ENCODE measurements at regions of chr3 and their contacts with region 1.

Region 1: GRCh38 chr3:186882881-186883685 is 40.6 kb downstream of the ADIPOQ start:
- DNase-seq: peak; percentile 31
- H3K4me3 Mint-ChIP-seq: peak overlapping the region; percentile 54
- H3K27ac Mint-ChIP-seq: peak overlapping the region; percentile 90
- H3K4me1 Mint-ChIP-seq: peaks cover 58% of the 10 kb centered on the region
- H3K27me3 Mint-ChIP-seq: no peaks in the 10 kb centered on the region

Region 2: DNA sequence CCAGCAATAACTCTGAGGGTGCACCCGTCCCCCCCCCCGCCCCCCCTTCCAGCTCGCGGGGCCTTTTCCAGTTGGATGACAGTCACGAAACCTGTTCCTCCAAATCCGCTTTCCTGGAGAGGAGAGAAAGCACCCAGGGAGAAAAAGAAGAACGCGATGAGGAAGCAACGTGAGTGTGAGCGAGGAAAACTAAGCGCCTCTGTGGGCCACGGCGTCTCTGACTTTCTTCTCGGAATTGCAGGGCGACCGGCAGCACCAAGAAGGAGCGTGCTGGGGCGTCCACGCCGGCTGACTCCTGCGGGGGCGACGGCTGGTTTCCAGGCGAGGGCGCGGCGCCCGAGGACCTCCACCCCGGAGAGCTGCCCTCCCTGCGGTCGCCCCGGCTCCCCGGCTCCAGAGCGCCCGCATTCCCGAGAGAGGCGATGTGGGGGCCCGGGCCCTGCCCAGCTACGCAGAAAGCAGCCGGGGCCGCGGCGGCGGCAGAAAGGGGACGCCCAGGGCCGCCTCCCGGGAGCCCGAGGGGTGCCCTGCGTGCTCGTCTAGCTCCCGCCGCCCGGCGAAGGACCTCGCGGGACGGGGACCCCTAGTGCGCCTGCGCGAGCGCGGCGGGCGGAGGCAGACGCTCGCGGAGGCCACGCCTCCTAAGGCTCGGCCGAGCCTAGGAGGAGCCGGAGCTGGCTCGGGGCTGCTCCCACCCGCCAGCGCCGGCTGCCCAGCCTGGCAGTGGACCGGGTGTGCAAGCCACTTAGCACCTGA is 55.9 kb before region 1 on chr3:
- intact Hi-C with region 1: loop called (anchors 2 kb)
- DNase-seq: peak; percentile 87
- H3K4me3 Mint-ChIP-seq: peak overlapping the region; percentile 93
- H3K27ac Mint-ChIP-seq: peak overlapping the region; percentile 78
- H3K4me1 Mint-ChIP-seq: peaks cover 20% of the 10 kb centered on the region
- H3K27me3 Mint-ChIP-seq: peaks cover 48% of the 10 kb centered on the region

Region 3: DNA sequence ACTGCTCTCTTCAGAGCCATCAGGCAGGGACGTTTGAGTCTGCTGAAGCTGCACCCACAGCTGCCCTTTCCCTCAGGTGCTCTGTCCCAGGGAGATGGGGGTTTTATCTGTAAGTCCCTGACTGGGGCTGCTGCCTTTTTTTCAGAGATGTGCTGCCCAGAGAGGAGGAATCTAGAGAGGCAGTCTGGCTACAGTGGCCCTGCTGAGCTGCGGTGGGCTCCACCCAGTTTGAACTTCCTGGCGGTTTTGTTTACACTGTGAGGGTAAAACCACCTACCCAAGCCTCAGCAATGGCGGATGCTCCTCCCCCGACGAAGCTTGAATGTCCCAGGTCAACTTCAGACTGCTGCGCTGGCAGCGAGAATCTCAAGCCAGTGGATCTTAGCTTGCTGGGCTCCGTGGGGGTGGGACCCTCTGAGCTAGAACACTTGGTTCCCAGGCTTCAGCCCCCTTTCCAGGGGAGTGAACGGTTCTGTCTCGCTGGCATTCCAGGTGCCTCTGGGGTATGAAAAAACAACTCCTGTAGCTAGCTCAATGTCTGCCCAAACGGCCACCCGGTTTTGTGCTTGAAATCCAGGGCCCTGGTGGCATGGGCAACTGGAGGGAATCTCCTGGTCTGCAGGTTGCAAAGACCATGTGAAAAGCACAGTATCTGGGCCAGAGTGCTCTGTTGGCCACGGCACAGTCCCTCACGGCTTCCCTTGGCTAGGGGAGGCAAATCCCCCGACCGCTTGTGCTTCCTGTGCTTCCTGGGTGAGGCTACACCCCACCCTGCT is 26.2 kb after region 1 on chr3:
- intact Hi-C with region 1: loop called (anchors 1 kb)
- DNase-seq: peak; percentile 76
- H3K4me3 Mint-ChIP-seq: peak overlapping the region; percentile 55
- H3K27ac Mint-ChIP-seq: peak overlapping the region; percentile 90
- H3K4me1 Mint-ChIP-seq: peaks cover 37% of the 10 kb centered on the region
- H3K27me3 Mint-ChIP-seq: no peaks in the 10 kb centered on the region

Region 4: DNA sequence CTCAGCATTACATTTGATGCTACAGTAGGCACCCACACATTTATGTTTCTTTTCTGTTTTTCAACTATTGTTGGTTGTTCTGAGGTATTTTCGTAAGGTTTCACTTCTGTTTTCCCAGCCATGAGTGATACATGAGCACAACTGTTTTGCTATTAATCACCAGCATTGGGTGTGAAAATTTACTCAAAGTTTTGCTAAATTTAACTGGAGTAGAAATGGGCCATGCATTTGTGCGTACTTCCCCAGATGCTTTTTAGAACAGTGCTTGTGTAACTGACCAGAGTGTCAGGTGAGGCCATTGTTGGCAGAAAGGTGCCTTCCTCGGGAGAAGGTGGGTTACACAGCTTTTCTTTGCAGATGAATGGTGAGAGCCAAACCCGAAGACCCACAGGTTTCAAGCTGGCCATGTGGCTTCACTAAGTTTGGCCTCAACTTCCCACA is 117.6 kb after region 1 on chr3:
- intact Hi-C with region 1: loop called (anchors 1 kb)
- DNase-seq: peak; percentile 29
- H3K4me3 Mint-ChIP-seq: peak overlapping the region; percentile 30
- H3K27ac Mint-ChIP-seq: peak overlapping the region; percentile 90
- H3K4me1 Mint-ChIP-seq: peaks cover 86% of the 10 kb centered on the region
- H3K27me3 Mint-ChIP-seq: no peaks in the 10 kb centered on the region

Region 5: DNA sequence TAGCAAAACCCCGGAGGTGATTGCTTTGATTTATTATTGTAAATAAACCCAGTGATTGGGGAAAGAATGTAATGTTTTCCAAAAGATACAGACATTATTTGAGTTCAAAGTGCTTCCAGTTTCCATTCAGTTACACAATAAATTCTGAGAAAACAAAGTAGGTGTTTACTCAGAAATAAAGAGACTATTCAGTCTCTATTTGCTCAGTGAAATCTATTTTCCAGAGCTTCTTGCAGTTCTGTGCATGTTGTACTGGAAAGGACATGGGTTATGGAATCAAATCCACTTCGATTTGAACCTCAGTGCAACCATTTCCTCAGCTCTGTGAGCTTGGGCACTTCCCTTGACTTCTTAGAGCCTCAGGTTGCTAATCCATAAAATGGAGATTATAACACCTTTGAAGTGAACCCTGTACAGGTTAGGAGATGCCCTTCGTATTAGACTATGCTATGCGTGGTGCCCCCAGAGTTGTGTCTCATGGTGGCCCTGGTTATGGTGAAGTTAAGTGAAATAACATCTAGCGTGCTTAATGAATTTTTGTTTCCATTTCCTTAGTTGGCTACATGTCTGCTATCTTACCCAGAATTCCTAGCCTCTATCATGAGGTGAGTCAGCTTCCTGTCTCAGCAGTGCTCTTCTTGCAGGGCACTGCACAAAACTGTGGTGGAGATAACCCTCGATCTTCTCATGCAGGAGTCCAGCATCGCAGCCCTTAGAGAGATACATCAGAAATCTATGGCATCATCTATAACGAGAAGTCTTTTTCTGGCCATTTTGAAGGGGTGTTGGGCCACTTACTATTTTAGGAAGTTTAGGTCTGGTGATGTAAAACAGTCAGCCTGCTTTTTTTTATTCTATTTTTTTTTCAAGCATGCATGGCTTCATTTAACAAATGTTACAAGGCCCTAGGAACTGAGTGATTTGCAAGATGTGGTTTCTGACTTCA is 158.6 kb after region 1 on chr3:
- intact Hi-C with region 1: loop called (anchors 1 kb)
- DNase-seq: peak; percentile 57
- H3K4me3 Mint-ChIP-seq: peak overlapping the region; percentile 82
- H3K27ac Mint-ChIP-seq: peak overlapping the region; percentile 95
- H3K4me1 Mint-ChIP-seq: peaks cover 85% of the 10 kb centered on the region
- H3K27me3 Mint-ChIP-seq: no peaks in the 10 kb centered on the region

Region 6: DNA sequence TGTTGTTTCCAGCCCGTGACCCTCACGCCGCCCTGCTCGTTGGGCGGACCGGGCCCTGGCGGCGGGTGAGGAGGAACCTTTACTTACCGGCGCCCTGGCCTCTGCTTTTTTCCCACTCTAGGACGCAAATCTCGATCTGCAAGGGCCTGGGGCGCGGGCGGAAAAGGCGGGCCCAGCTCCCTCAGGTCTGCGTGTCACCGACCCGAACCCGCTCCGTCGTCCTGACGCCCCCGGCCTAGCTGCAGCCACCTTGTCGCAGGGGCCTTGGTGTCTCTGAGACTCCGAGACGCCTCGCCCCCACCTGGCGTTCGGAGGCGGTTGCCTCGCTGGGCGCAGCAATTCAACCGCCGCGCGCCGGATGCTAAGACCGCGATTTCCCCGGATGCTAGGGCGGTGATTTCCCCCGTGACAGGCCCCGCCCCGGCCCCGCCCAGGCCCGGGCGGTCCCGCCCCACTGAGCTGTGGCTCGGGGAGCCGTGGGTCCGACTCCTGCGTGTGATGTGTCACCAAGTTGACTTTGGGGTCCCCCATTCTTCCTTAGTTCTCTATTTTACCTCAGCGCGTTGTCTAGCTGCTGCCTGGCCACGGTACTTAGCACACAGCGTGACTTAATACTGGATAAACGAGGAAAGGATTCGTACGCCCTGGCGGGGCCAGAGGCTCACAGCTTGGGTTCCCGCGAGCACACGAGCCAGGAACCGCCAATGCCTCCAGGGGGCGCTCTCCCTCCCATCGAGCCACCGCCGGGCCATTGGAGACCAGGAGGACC is 256.2 kb after region 1 on chr3 and contains the start of gene RPL39L:
- intact Hi-C with region 1: loop called (anchors 1 kb)
- DNase-seq: peak; percentile 91
- H3K4me3 Mint-ChIP-seq: peak within 1 kb of the TSS; percentile 92
- H3K27ac Mint-ChIP-seq: peak within 1 kb of the TSS; percentile 96
- H3K4me1 Mint-ChIP-seq: peaks cover 34% of the 10 kb centered on the region
- H3K27me3 Mint-ChIP-seq: peaks cover 3% of the 10 kb centered on the region
- total RNA-seq, gene RPL39L: 7.5 and 8.3 TPM in 2 replicates

Measured in activated T-helper 1 cell treated with anti-CD3 and anti-CD28 coated beads, Interleukin-12 subunit alpha, Interleukin-12 subunit beta, Interleukin-2, Interleukin-4 antibody, amounts not matched to agents 30 ng/mL and 10 ng/mL and 1 ng/mL, durations not matched to agents 14 hours and 24 hours and 36 hours (primary cell).